K562 (cell line): ENCODE measurements at regions of chr7 and their contacts with region 1.

Region 1: DNA sequence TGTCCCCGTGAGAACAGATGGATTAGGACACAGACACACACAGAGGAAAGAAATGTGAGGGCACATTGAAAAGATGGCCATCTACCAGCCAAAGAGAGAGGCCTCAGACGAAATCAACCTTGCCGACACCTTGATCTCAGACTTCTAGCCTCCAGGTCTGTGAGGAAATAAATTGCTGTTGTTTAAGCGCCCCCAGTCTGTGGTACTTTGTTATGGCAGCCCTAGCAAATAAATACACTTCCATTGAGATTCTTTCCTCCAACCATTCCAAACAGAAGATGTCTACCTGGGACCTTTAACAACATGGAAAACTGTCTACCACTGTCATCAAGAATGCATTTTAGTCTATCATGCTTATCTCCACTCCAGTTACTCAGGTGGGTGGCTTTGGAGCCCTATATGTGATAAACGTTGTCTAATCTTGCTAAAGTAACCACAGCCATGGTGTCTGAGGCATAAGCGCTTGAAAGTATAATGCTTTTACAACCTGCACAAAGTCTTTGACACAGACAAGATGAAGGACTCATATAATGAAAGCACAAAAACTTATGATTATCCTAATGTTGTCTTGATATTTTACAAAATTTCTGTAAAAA is 244.3 kb downstream of the MTERF1 start:
- DNase-seq: peak in 2 of 4 experiments; percentile 15 to 71
- ATAC-seq: peak; percentile 90
- H3K4me3 ChIP-seq: no peak overlapping the region
- H3K27ac ChIP-seq: no peak overlapping the region
- H3K4me1 ChIP-seq: no peaks in the 10 kb centered on the region
- H3K27me3 ChIP-seq: peaks cover 0 to 4% of the 10 kb centered on the region in 2 experiments; a peak in 2 of 5 replicates
- CTCF ChIP-seq: peak; percentile 71 to 86 (median 78)
- EP300 ChIP-seq: no peak
- POLR2A ChIP-seq: no peak
- RAD21 ChIP-seq: peak; percentile 91 to 93

Region 2: GRCh38 chr7:91288208-91288824 is 347.9 kb before region 1 on chr7:
- CTCF ChIA-PET with region 1: interaction called, 8 read pairs
- POLR2A ChIA-PET with region 1: no interaction called
- in situ Hi-C with region 1: no loop called
- intact Hi-C with region 1: loop called (anchors 1 kb)
- DNase-seq: peak; percentile 47 to 81 (median 54)
- ATAC-seq: peak; percentile 93
- H3K4me3 ChIP-seq: no peak overlapping the region
- H3K27ac ChIP-seq: no peak overlapping the region
- H3K4me1 ChIP-seq: no peaks in the 10 kb centered on the region
- H3K27me3 ChIP-seq: no peaks in the 10 kb centered on the region; a peak in 1 of 5 replicates
- CTCF ChIP-seq: peak; percentile 74 to 85 (median 82)
- EP300 ChIP-seq: no peak
- POLR2A ChIP-seq: no peak
- RAD21 ChIP-seq: peak; percentile 66 to 83

Region 3: GRCh38 chr7:91383053-91383904 is 252.9 kb before region 1 on chr7:
- CTCF ChIA-PET with region 1: no interaction called
- POLR2A ChIA-PET with region 1: no interaction called
- in situ Hi-C with region 1: no loop called
- intact Hi-C with region 1: no loop called
- DNase-seq: no peak
- ATAC-seq: no peak
- H3K4me3 ChIP-seq: no peak overlapping the region
- H3K27ac ChIP-seq: no peak overlapping the region
- H3K4me1 ChIP-seq: no peaks in the 10 kb centered on the region
- H3K27me3 ChIP-seq: peaks cover 0 to 4% of the 10 kb centered on the region in 2 experiments; a peak in 1 of 5 replicates
- CTCF ChIP-seq: no peak
- EP300 ChIP-seq: no peak
- POLR2A ChIP-seq: no peak
- RAD21 ChIP-seq: no peak

Region 4: GRCh38 chr7:91424371-91424770 is 211.9 kb before region 1 on chr7:
- CTCF ChIA-PET with region 1: no interaction called
- POLR2A ChIA-PET with region 1: no interaction called
- in situ Hi-C with region 1: no loop called
- intact Hi-C with region 1: loop called (anchors 2 kb)
- DNase-seq: peak in 2 of 4 experiments; percentile 9 to 15
- ATAC-seq: peak; percentile 52; the same call in 1 of the 3 replicates
- H3K4me3 ChIP-seq: no peak overlapping the region
- H3K27ac ChIP-seq: no peak overlapping the region
- H3K4me1 ChIP-seq: no peaks in the 10 kb centered on the region
- H3K27me3 ChIP-seq: 0 out of 5 replicates have a peak, but pooled peaks cover 0 to 3% of the 10 kb centered on the region in 2 experiments
- CTCF ChIP-seq: peak; percentile 25 to 36 (median 32); a peak in 5 of 6 replicates
- EP300 ChIP-seq: no peak
- POLR2A ChIP-seq: no peak
- RAD21 ChIP-seq: peak in 1 of 2 experiments; percentile 45; a peak in 2 of 4 replicates

Region 5: DNA sequence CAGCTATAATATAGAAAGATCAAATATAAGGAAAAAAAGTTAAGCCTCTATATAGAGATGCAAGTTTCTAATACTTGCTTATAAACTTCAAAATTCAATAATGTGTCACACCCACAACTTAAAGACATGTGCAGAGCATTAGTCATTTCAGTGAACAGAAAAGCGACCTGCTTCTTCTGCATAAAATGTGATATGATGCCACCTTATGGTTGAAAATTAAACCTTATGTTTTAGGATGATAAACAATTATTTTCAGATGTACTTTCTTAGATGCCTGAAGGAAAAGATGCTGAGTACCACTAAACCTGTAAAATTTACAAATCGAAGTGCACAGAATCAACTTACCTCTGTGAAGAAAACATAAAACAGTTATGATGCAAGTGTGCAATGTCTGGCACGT is 148.2 kb after region 1 on chr7:
- CTCF ChIA-PET with region 1: no interaction called
- POLR2A ChIA-PET with region 1: interaction called, 7 read pairs
- in situ Hi-C with region 1: no loop called
- intact Hi-C with region 1: loop called (anchors 5 kb)
- DNase-seq: peak; percentile 15 to 23 (median 20)
- ATAC-seq: 0 out of 3 replicates have a peak, but pooled peaks have one; percentile 49
- H3K4me3 ChIP-seq: no peak overlapping the region
- H3K27ac ChIP-seq: no peak overlapping the region
- H3K4me1 ChIP-seq: no peaks in the 10 kb centered on the region
- H3K27me3 ChIP-seq: no peaks in the 10 kb centered on the region
- CTCF ChIP-seq: peak in 2 of 3 experiments; percentile 17 to 65; a peak in 3 of 6 replicates
- EP300 ChIP-seq: no peak
- POLR2A ChIP-seq: no peak
- RAD21 ChIP-seq: peak; percentile 78 to 83

Region 6: DNA sequence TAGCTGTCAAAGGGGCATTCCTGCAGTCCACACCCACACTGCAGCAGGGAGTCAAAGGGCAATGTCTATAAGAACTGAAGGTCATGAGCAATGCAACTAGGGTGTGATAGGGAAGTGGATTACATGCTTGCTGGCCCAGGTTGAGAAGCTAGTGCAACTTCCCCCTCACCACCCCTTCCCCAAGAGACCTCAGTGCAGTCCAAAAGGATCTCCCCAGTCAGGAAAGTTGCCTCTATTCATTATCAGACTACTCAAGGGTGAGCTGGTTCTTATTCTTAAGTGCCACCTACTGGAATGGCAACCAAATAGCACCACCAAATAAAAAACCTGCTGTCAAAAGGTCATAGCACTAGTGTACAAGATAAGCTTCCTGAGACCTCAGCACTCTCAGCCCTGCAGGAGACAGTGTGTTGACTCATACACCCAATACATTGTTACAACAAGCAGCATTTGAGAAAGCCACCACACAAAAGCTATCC is 216.1 kb after region 1 on chr7:
- CTCF ChIA-PET with region 1: no interaction called
- POLR2A ChIA-PET with region 1: no interaction called
- in situ Hi-C with region 1: no loop called
- intact Hi-C with region 1: loop called (anchors 10 kb)
- DNase-seq: peak in 2 of 4 experiments; percentile 51 to 75
- ATAC-seq: peak; percentile 96
- H3K4me3 ChIP-seq: no peak overlapping the region
- H3K27ac ChIP-seq: no peak overlapping the region
- H3K4me1 ChIP-seq: no peaks in the 10 kb centered on the region
- H3K27me3 ChIP-seq: no peaks in the 10 kb centered on the region
- CTCF ChIP-seq: peak; percentile 61 to 77 (median 69)
- EP300 ChIP-seq: 0 out of 2 replicates have a peak, but pooled peaks have one; percentile 31
- POLR2A ChIP-seq: no peak
- RAD21 ChIP-seq: peak; percentile 10 to 61; a peak in 2 of 4 replicates